Left colon (tissue), 2 donors: ENCODE measurements at regions of chr1 and their contacts with region 1.

Region 1: GRCh38 chr1:13960375-13960987 is 260.5 kb downstream of the PRDM2 start:
- DNase-seq: peak; percentile 38 to 80
- ATAC-seq: peak; percentile 85

Region 2: GRCh38 chr1:13667691-13668090 is 292.8 kb before region 1 on chr1:
- intact Hi-C with region 1: loop called (anchors 5 to 10 kb)
- DNase-seq: no peak
- ATAC-seq: no peak

Region 3: DNA sequence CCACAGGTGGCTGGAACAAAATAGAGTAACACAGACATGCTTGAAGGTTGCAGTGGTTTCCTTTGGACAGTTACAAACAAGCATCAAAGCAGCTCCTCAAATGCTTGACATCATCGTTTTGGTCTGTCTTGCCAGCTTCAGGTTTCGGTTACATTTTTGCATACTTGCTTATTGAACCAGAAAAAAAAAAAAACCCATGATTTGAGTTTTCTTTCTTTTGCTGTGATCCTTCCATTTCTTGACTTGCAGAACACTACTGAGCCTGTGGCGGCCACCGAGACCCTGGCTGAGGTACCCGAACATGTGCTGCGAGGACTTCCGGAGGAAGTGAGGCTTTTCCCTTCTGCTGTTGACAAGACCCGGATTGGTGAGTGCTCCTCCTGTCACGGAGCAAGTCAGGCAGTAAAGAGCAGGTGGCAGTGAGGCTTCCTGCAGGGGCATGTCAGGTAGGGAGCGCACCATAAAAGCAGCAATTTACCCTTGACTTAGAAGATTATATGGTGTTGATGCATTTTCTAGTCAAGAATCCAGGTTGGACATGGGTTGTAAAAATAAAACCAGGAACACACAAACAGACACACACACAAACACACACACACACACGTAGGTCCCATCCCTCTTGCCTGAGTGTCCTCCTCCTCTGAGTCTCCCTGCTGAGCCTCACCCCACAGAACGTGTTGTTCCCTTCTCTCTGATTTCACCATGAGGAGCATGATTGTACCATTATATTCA is 229.6 kb before region 1 on chr1:
- intact Hi-C with region 1: no loop called
- DNase-seq: peak; percentile 62 to 77
- ATAC-seq: peak; percentile 96